ENCODE measurements at regions of chr10 and their contacts with region 1.

Region 1: GRCh38 chr10:60910543-60910942 is 33.4 kb downstream of the RHOBTB1 start:
- DNase-seq: peak in 1 of 2 donors; percentile 76
- ATAC-seq: peak; percentile 59
- H3K4me3 ChIP-seq: no peak overlapping the region
- H3K27ac ChIP-seq: peak overlapping the region in 1 of 2 donors; percentile 44
- H3K4me1 ChIP-seq: peaks cover 3 to 6% of the 10 kb centered on the region in 2 donors
- H3K27me3 ChIP-seq: no peaks in the 10 kb centered on the region

Region 2: GRCh38 chr10:60937784-60938654 is 27.5 kb after region 1 on chr10:
- intact Hi-C with region 1: loop called (anchors 1 to 5 kb)
- DNase-seq: no peak
- ATAC-seq: peak; percentile 82
- H3K4me3 ChIP-seq: no peak overlapping the region
- H3K27ac ChIP-seq: peak overlapping the region in 1 of 2 donors; percentile 67
- H3K4me1 ChIP-seq: peaks cover 0 to 8% of the 10 kb centered on the region in 2 donors
- H3K27me3 ChIP-seq: no peaks in the 10 kb centered on the region

Region 3: GRCh38 chr10:60944159-60944909 is 33.8 kb after region 1 on chr10 and contains the start of gene RHOBTB1:
- intact Hi-C with region 1: loop called in 1 of 2 experiments (anchors 5 kb)
- DNase-seq: peak; percentile 88 to 93
- ATAC-seq: peak; percentile 92
- H3K4me3 ChIP-seq: peak within 1 kb of the TSS; percentile 91 to 95
- H3K27ac ChIP-seq: peak within 1 kb of the TSS; percentile 92 to 97
- H3K4me1 ChIP-seq: no peaks in the 10 kb centered on the region
- H3K27me3 ChIP-seq: no peaks in the 10 kb centered on the region
- total RNA-seq, gene RHOBTB1: 12.9 to 22.8 TPM

Region 4: DNA sequence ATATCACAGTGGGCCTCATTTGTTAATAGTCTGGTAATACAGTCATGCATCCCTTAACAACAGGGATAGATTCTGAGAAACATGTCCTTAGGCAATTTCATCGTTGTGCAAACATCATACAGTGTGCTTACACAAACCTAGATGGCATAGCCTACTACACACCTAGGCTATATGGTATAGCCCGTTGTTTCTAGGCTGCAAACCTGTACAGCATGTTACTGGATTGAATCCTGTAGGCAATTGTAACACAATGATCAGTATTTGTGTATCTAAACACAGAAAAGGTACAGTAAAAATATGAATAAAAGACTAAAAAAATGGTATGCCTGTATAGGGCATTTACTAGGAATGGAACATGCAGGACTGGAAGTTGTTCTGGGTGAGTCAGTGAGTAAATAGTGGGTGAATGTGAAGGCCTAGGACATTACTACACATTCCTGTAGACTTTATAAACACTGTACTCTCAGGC is 45.4 kb after region 1 on chr10:
- intact Hi-C with region 1: no loop called
- DNase-seq: no peak
- ATAC-seq: no peak
- H3K4me3 ChIP-seq: no peak overlapping the region
- H3K27ac ChIP-seq: no peak overlapping the region
- H3K4me1 ChIP-seq: no peaks in the 10 kb centered on the region
- H3K27me3 ChIP-seq: no peaks in the 10 kb centered on the region

Measured in aorta (tissue), 5 donors.